Endothelial cell of umbilical vein (primary cell): ENCODE measurements at regions of chr3 and their contacts with region 1.

Region 1: GRCh38 chr3:4712143-4712542 is 219.0 kb downstream of the ITPR1 start:
- DNase-seq: no peak
- H3K4me3 ChIP-seq: no peak overlapping the region
- H3K27ac ChIP-seq: no peak overlapping the region
- H3K4me1 ChIP-seq: peaks cover 15% of the 10 kb centered on the region
- H3K27me3 ChIP-seq: no peaks in the 10 kb centered on the region
- CTCF ChIP-seq: no peak
- POLR2A ChIP-seq: no peak

Region 2: DNA sequence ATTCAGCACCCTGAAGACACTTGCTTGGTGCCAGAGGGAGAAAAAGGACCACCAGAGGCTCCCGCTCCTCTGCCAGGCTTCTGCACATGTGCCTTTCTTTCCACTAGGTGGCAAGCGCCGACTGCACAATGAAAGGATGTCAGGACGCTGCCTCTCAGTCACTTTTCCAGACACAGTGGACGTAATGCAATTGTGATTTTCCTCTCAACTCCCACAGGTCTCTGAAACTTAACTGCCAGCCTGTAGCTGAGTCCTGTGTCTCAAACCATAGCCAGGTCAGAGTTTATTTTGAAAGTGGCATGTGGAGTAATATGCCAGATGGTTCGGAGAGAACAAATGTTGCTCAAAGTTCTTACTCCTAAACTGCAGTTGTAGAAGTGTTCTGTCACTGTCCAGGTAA is 56.1 kb before region 1 on chr3:
- CTCF ChIA-PET with region 1: interaction called, 29 read pairs
- POLR2A ChIA-PET with region 1: no interaction called
- dilution Hi-C with region 1: no loop called
- intact Hi-C with region 1: loop called (anchors 1 kb)
- DNase-seq: peak; percentile 81
- H3K4me3 ChIP-seq: no peak overlapping the region
- H3K27ac ChIP-seq: peak overlapping the region; percentile 48
- H3K4me1 ChIP-seq: peaks cover 11% of the 10 kb centered on the region
- H3K27me3 ChIP-seq: no peaks in the 10 kb centered on the region
- CTCF ChIP-seq: peak; percentile 91 to 92
- POLR2A ChIP-seq: no peak

Region 3: DNA sequence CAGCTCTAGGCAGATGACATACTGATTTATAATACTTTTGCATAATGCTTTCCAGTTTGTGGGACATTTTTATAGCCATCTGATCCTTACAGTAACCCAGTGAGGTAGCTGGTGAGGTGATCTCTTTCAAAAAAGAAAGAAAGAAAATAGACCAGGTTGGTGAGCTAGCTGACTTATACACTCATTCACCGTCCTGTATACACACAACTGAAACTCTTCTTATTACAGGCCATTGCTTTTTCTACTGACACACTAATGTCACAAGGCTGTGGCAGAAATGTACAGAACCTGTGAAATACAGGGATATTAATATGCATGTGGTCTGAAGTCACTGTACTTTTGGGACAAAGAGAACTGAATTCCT is 116.9 kb after region 1 on chr3:
- CTCF ChIA-PET with region 1: no interaction called
- POLR2A ChIA-PET with region 1: no interaction called
- dilution Hi-C with region 1: no loop called
- intact Hi-C with region 1: no loop called
- DNase-seq: no peak
- H3K4me3 ChIP-seq: no peak overlapping the region
- H3K27ac ChIP-seq: no peak overlapping the region
- H3K4me1 ChIP-seq: peaks cover 35% of the 10 kb centered on the region
- H3K27me3 ChIP-seq: no peaks in the 10 kb centered on the region
- CTCF ChIP-seq: no peak
- POLR2A ChIP-seq: no peak

Region 4: GRCh38 chr3:4986782-4987537 is 274.8 kb after region 1 on chr3:
- CTCF ChIA-PET with region 1: interaction called, 284 read pairs
- POLR2A ChIA-PET with region 1: no interaction called
- dilution Hi-C with region 1: no loop called
- intact Hi-C with region 1: no loop called
- DNase-seq: peak; percentile 97
- H3K4me3 ChIP-seq: peak overlapping the region in 2 of 3 experiments; percentile 1 to 25
- H3K27ac ChIP-seq: peak overlapping the region; percentile 100
- H3K4me1 ChIP-seq: peaks cover 56% of the 10 kb centered on the region
- H3K27me3 ChIP-seq: no peaks in the 10 kb centered on the region
- CTCF ChIP-seq: no peak
- POLR2A ChIP-seq: no peak

Region 5: DNA sequence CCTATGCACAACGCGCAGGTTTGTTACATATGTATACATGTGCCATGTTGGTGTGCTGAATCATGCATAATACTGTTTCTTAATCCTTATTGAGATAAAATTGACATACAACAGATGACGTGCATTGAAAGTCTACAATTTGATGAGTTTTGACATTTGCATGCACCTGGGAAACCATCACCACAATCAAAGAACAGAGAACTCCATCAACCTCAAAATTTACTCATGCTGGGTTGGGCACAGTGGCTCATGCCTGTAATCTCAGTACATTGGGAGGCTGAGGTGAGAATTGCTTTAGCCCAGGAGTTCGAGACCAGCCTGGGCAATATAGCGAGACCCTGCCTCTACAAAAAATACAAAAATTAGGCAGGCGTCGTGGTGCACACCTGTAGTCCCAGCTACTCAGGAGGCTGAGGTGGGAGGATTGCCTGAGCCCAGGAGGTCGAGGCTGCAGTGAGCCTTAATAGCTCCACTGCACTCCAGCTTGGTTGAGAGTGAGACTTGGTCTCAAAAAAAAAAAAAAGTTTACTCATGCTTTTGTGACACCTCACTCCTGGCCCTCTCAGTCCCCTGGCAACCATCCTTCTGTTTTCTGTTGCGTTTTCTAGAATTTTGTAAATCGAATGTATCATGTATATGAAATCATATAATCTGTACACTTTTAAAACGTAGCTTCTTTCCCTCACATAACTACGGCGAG is 323.7 kb after region 1 on chr3:
- CTCF ChIA-PET with region 1: interaction called, 28 read pairs
- POLR2A ChIA-PET with region 1: no interaction called
- dilution Hi-C with region 1: no loop called
- intact Hi-C with region 1: no loop called
- DNase-seq: no peak
- H3K4me3 ChIP-seq: no peak overlapping the region
- H3K27ac ChIP-seq: no peak overlapping the region
- H3K4me1 ChIP-seq: no peaks in the 10 kb centered on the region
- H3K27me3 ChIP-seq: no peaks in the 10 kb centered on the region
- CTCF ChIP-seq: no peak
- POLR2A ChIP-seq: no peak

Region 6: GRCh38 chr3:5057857-5058324 is 345.7 kb after region 1 on chr3:
- CTCF ChIA-PET with region 1: interaction called, 382 read pairs
- POLR2A ChIA-PET with region 1: interaction called, 5 read pairs
- dilution Hi-C with region 1: no loop called
- intact Hi-C with region 1: loop called (anchors 1 kb)
- DNase-seq: peak; percentile 85
- H3K4me3 ChIP-seq: no peak overlapping the region
- H3K27ac ChIP-seq: no peak overlapping the region
- H3K4me1 ChIP-seq: no peaks in the 10 kb centered on the region
- H3K27me3 ChIP-seq: peaks cover 0 to 2% of the 10 kb centered on the region in 2 experiments
- CTCF ChIP-seq: peak; percentile 59 to 65
- POLR2A ChIP-seq: no peak

Region 7: GRCh38 chr3:5187156-5187919 is 475.2 kb after region 1 on chr3 and contains the start of gene EDEM1:
- CTCF ChIA-PET with region 1: interaction called, 4 read pairs
- POLR2A ChIA-PET with region 1: no interaction called
- dilution Hi-C with region 1: no loop called
- intact Hi-C with region 1: loop called (anchors 5 kb)
- DNase-seq: peak; percentile 98
- H3K4me3 ChIP-seq: peak within 1 kb of the TSS; percentile 82 to 88 (median 83)
- H3K27ac ChIP-seq: peak within 1 kb of the TSS; percentile 92
- H3K4me1 ChIP-seq: peaks cover 21% of the 10 kb centered on the region
- H3K27me3 ChIP-seq: no peaks in the 10 kb centered on the region
- CTCF ChIP-seq: no peak
- POLR2A ChIP-seq: peak; percentile 72
- total RNA-seq, gene EDEM1: 61.1 and 65.4 TPM in 2 replicates